Naive thymus-derived CD8-positive, alpha-beta T cell (primary cell): ENCODE measurements at regions of chr6 and their contacts with region 1.

Region 1: DNA sequence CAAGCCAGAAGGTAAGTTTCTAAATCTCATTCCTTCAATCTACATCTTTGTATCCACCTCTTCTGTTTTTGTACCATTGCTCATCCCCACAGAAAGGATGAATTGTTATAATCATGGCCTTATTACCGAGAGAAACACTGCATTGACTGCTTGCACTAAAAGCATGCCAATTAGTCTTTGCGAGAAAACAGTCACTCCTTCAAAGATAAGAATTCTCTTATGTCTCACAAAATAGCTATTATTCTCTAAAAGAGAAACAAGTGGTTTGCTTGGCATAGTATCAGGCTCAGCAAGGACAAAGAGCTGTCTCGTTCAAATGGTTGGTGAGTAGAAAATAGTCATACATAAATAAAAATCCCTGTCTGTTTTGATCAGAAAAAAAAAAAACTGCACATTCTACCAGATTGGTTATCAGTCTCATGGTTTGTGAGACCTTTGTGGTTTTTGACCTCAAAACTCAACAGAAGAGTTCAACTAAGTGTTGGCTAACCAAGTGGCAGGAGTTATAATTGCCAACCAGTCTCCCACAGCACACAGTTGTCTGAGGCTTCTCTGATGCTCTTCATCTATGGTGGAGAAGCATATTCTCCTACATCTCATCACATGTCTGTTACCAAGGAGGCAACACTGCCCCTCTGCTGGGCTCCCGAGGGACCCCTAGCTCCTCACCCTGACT is 35.1 kb upstream of the ARMH2 start:
- DNase-seq: no peak
- ATAC-seq: peak in 1 of 2 donors; percentile 27
- H3K4me3 Mint-ChIP-seq: peak overlapping the region in 1 of 10 donors; percentile 29
- H3K27ac Mint-ChIP-seq: peak overlapping the region; percentile 1 to 93 (median 73)
- H3K4me1 Mint-ChIP-seq: peaks cover 7 to 59% (median 41%) of the 10 kb centered on the region in 4 donors
- H3K27me3 Mint-ChIP-seq: no peaks in the 10 kb centered on the region

Region 2: DNA sequence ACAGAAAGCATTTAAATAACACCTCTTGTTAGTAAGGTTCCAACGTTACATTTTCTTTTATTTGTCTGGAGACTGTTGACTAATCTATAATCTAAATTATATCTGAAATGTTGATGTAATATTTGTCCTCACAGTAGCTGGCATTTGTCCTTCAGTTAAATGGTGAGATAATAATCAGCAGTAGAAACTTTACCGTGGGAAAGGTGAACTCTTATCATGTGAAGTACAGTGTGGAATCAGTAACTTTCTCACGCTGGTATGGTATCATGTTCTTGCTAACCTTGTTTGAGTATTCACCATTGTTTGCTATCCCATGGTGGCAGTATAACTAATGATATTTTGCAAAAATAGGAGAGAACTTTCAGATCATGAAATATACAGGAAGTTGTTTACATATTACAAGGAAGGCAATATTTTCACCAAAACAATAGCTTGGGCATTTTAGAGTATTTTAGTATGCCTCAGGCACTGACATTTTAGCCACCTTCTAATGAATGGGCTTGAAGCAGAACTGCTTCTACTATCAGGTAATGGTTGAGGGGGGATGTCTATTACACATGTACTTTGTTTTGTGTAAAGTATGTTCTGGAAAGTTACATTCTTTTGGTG is 54.3 kb before region 1 on chr6:
- POLR2A ChIA-PET with region 1: no interaction called
- DNase-seq: no peak
- ATAC-seq: no peak
- H3K4me3 Mint-ChIP-seq: no peak overlapping the region
- H3K27ac Mint-ChIP-seq: no peak overlapping the region
- H3K4me1 Mint-ChIP-seq: peaks cover 7 to 31% (median 17%) of the 10 kb centered on the region in 4 donors
- H3K27me3 Mint-ChIP-seq: no peaks in the 10 kb centered on the region

Region 3: DNA sequence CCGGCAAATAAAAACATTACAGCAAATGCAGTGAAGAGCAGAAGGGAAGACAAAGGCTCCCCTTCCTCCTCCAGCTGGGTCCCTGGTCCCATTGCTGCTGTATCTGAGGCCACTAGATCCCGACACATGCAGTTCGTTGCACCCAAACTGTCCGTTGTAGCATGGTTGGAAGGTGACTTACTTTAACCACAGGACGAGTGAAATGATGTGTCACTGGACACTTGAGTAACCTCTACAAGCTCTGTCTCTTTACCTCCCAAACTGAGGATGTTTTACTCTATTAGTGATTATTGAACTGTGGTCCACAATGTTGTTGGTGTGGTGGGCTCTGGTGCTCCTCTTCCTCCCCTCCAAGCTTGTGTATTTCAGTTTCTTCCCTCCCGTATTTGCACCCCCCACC is 11.1 kb after region 1 on chr6:
- POLR2A ChIA-PET with region 1: interaction called, 10 read pairs
- DNase-seq: no peak
- ATAC-seq: no peak
- H3K4me3 Mint-ChIP-seq: peak overlapping the region in 2 of 10 donors; percentile 37 to 48
- H3K27ac Mint-ChIP-seq: peak overlapping the region; percentile 67 to 90 (median 80)
- H3K4me1 Mint-ChIP-seq: peaks cover 35 to 84% (median 72%) of the 10 kb centered on the region in 4 donors
- H3K27me3 Mint-ChIP-seq: no peaks in the 10 kb centered on the region